ENCODE measurements at regions of chr2 and their contacts with region 1.

Region 1: GRCh38 chr2:119759451-119760236 is at the start of gene PTPN4:
- DNase-seq: peak; percentile 92 to 99 (median 98)
- ATAC-seq: peak; percentile 95
- H3K4me3 ChIP-seq: peak within 1 kb of the TSS; percentile 59 to 93
- H3K27ac ChIP-seq: peak within 1 kb of the TSS; percentile 90 to 93
- H3K4me1 ChIP-seq: peaks cover 5 to 39% of the 10 kb centered on the region in 2 donors
- H3K27me3 ChIP-seq: no peaks in the 10 kb centered on the region
- CTCF ChIP-seq: no peak
- polyA plus RNA-seq, gene PTPN4: 22.0 to 29.8 (median 26.9) TPM

Region 2: GRCh38 chr2:119694470-119694844 is 65.2 kb before region 1 on chr2:
- intact Hi-C with region 1: no loop called
- DNase-seq: no peak
- ATAC-seq: peak; percentile 53
- H3K4me3 ChIP-seq: no peak overlapping the region
- H3K27ac ChIP-seq: peak overlapping the region in 1 of 2 donors; percentile 2
- H3K4me1 ChIP-seq: peaks cover 5 to 11% of the 10 kb centered on the region in 2 donors
- H3K27me3 ChIP-seq: no peaks in the 10 kb centered on the region
- CTCF ChIP-seq: no peak

Region 3: DNA sequence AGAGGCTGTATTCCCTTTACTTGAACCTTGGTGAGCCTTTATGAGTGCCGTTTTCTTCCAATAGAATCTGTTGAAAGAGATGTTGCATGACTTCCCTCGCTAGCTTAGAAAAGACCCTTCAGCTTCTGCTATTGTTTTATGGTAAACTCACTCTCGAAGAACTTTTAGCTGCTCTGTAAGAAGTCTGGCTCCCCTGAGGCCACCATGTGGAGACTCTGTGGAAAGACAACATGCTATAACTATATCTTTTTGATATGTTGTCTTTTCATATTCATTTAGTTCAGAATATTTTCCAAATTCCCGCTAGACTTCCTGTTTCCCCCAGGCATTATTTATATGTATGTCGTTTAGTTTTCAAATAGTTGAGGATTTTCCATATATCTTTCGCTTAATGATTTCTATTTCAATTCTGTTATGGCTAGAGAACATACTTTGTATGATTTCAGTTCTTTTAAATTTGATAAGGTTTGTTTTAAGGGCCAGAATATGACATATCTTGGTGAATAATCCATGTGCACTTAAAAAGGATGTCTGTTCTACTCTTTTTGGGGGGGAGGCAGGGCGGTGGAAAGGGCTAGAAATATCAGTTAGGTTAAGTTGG is 64.2 kb after region 1 on chr2:
- intact Hi-C with region 1: loop called in 1 of 2 experiments (anchors 5 kb)
- DNase-seq: peak in 2 of 4 donors; percentile 27 to 50
- ATAC-seq: peak; percentile 79
- H3K4me3 ChIP-seq: no peak overlapping the region
- H3K27ac ChIP-seq: no peak overlapping the region
- H3K4me1 ChIP-seq: peaks cover 0 to 9% of the 10 kb centered on the region in 2 donors
- H3K27me3 ChIP-seq: no peaks in the 10 kb centered on the region
- CTCF ChIP-seq: peak; percentile 45 to 64

Measured in left lung (tissue), 14 donors.